ENCODE measurements at regions of chr11 and their contacts with region 1.

Region 1: DNA sequence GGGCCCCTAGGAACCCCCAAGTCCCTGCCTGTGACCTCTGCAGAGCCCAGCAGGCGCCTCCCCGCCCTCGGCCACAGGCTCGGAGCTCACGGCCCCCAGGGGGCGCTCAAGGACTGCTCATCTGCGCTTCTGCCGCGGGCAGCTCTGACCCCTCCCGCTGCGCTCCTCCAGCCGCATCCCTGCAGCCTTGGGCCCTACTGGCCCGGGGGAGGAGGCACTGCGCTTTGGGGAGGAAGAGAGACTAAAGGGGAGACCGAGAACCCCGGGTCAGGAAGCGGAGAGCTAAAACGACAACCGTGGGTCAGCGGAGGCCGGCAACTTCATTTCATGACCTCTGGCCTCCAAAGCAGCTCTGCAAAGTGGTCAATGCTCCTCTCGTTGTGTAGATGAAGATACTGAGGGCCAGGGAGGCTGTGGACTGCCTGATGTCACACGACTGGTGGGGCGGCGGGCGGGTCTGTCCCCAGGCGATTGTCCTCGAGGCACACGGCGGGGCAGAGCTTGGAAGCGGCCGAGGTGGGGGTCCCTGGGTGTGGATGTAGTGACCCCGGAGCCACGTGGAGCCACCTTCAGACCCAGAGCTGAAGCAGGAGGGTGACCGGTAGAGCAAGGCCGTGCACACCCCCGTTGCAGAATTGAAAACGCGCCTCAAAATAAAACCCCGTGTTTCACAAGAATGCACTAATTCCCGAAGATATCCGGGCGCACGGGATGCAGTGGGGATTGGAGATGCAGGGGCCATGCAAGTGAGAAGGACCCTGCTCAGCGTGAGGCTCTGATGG is 2.7 kb upstream of the KRTAP5-6 start:
- DNase-seq: peak; percentile 95
- H3K4me3 ChIP-seq: peak overlapping the region in 1 of 2 experiments; percentile 51; a peak in 1 of 4 replicates
- H3K27ac ChIP-seq: peak overlapping the region in 1 of 2 experiments; percentile 73; a peak in 1 of 4 replicates
- H3K4me1 ChIP-seq: peaks cover 6 to 13% of the 10 kb centered on the region in 2 experiments; a peak in 2 of 4 replicates
- H3K27me3 ChIP-seq: no peaks in the 10 kb centered on the region
- CTCF ChIP-seq: peak; percentile 85
- EP300 ChIP-seq: no peak
- RAD21 ChIP-seq: peak; percentile 91

Region 2: DNA sequence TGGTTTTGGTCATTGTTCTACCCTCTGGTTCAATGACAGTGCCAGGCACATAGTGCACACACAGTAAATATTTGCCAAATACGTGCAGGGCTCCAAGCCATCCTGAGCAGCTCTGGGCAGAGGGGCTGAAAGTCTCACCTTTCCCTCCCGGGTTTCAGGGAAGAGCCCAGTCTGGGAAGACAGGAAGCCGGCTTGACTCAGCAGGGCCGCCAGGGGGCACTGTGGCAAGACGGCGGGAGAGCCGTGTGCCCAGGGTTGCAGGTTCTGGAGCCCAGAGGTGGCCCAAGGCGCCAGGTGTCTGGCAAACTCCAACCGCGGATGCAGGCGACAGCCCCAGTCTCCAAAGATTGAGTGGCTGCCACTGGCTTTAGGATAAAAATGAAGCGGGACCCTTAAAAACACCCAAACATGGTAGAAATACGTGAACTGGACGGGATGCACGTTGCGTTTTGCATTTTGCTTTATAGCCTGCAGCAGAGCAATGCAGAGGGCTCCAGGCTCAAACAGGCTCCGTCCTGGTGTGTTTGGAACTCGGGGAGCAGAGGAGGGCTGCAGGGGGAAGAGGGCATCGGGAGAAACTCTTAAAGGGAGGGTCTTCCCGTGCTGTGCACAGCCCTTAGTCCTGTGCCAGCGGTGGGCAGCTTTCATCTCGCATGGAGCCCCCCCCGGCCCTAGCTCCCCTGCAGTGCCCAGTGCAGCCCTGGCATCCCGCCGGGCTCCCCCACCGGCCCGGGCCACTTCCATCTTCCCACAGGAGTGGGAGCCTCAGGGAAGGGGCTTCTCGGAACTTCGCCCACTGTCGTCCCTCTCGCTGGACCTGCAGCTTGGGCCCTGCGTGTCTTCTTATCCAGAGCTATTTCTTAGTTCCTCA is 53.9 kb before region 1 on chr11:
- CTCF ChIA-PET with region 1: interaction called, 28 read pairs
- POLR2A ChIA-PET with region 1: no interaction called
- DNase-seq: peak; percentile 86
- H3K4me3 ChIP-seq: no peak overlapping the region; a peak in 1 of 4 replicates
- H3K27ac ChIP-seq: no peak overlapping the region; a peak in 1 of 4 replicates
- H3K4me1 ChIP-seq: peaks cover 0 to 25% of the 10 kb centered on the region in 2 experiments; a peak in 1 of 4 replicates
- H3K27me3 ChIP-seq: no peaks in the 10 kb centered on the region
- CTCF ChIP-seq: peak; percentile 82
- EP300 ChIP-seq: no peak
- RAD21 ChIP-seq: peak; percentile 14; the same call in 1 of the 2 replicates

Region 3: DNA sequence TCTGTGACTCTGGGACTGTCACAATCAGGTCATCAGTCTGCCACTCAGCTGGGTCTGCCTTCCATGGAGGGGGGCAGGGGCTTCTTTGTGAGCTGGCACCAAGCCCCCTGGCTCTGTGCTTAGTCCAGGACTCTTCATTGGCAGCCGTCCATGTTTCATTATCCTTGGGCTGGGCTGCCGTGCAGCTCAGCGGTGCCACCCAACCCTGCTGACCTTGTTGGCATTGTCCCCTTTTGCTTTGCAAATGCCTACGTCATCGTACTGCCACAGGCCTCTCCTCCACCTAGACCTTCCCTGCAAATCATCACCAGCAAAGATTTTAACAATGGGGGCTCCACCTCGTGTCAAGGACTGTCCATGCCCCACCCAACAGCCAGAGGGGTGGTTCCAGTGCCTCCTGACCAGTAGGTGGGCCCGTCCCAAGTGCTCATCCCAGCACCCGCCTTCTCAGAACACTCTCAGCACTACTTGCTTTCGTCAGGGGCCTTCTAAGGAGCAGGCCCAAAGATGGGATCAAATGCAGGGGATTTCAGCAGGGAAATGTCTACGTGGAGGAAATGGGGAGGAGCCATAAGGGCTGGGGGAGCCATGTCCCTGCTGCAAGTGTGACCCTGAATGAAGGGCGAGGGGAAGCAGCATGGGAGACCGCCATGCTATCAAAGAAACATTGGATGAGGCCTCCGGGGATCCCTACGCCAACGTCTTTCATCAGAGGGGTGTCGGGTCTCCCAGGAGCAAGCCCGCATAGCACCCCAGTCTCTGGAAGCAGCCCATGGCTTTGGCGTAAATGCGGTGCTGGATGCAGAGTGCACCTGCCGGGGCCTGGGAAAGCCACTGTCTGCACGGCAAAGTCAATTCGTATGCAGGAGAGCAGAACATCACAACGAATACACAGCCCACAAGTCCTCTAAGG is 21.0 kb after region 1 on chr11:
- CTCF ChIA-PET with region 1: interaction called, 20 read pairs
- POLR2A ChIA-PET with region 1: no interaction called
- DNase-seq: no peak
- H3K4me3 ChIP-seq: no peak overlapping the region
- H3K27ac ChIP-seq: no peak overlapping the region
- H3K4me1 ChIP-seq: peaks cover 0 to 8% of the 10 kb centered on the region in 2 experiments; a peak in 1 of 4 replicates
- H3K27me3 ChIP-seq: no peaks in the 10 kb centered on the region; the same call in 1 of the 2 replicates
- CTCF ChIP-seq: no peak
- EP300 ChIP-seq: no peak
- RAD21 ChIP-seq: no peak

Region 4: DNA sequence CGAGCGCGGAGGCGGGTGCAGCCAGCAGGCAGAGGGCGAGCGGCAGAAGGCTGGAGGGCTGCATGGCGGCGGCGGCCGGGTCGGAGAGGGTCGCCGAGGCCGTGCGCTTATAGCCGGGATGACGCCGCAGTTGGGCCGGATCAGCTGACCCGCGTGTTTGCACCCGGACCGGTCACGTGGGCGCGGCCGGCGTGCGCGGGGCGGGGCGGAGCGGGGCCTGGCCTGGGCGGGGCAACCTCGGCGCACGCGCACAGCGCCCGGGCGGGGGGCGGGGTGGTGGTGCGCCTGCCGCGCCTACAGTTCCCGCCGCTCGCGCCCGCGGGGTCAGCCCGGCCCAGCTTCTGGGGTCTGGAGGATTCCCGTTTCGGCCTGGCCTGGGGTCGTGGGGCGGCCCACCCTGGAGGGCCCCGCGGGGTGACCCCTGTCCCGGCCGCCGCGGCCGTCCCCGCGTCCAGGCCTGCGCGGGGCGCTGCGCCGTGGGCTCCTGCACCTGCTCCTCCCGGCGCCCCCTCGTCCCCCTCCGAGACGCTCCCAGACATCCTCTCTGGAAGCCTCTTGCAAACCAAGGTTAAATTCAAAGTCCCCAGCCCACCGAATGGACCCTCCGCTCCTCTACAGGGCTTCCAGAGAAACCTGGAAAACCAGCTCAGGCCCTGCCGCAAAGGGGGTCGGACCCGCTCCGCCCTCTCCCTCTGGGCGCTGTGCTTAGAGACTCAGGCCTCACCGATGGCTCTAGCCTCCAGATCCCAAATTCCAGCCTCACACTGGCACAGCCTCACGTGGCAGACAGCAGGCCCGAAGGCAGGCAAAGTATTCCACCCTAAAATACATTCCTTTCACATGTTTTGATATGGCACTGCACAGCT is 69.8 kb after region 1 on chr11 and contains the start of gene CTSD:
- CTCF ChIA-PET with region 1: interaction called, 18 read pairs
- POLR2A ChIA-PET with region 1: interaction called, 3 read pairs
- DNase-seq: peak; percentile 100
- H3K4me3 ChIP-seq: peak within 1 kb of the TSS; percentile 92 to 94
- H3K27ac ChIP-seq: peak within 1 kb of the TSS in 1 of 2 experiments; percentile 81; a peak in 2 of 4 replicates
- H3K4me1 ChIP-seq: peaks cover 4 to 19% of the 10 kb centered on the region in 2 experiments; a peak in 3 of 4 replicates
- H3K27me3 ChIP-seq: no peaks in the 10 kb centered on the region
- CTCF ChIP-seq: peak; percentile 31
- EP300 ChIP-seq: no peak
- RAD21 ChIP-seq: no peak
- polyA plus RNA-seq, gene CTSD: 93.0 and 187 TPM in 2 replicates

Region 5: DNA sequence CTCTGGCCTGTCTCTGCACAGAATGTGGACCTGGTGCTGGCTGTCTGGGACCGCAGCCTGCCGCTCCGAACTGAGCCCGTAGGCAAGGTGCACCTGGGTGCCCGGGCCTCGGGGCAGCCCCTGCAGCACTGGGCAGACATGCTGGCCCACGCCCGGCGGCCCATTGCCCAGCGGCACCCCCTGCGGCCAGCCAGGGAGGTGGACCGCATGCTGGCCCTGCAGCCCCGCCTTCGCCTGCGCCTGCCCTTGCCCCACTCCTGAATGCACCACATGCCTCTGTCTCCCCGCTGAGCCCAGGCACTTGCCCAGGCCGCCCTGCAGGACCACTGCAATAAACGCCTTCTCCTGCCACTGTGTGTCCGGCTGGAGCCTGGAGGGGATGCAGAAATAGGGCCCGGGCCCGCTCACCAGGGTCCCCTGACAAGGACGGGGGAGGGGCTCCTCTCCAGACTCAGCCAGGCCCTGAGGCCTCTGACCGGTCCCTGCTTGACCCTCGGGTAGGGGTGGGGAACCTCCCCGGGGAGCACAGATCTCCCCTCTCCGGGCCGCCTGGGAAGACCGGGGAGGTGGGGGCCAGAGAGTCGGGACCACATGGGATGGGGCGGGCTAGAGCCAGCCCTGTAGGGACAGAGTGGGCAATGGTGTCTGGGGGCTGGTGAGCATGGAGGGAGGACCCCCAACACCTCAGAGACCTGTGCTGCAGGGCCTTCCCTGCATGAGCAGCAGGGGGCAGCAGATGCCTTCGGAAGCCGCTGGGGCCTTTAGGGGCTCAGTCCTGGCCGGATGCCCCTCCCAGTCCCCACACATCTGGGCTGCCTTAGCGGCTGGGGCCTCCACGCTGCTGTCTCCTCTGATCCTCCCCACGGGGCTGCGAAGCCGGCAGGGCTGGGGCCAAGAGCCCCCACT is 143.2 kb after region 1 on chr11:
- CTCF ChIA-PET with region 1: interaction called, 585 read pairs
- POLR2A ChIA-PET with region 1: interaction called, 11 read pairs
- DNase-seq: peak; percentile 97
- H3K4me3 ChIP-seq: no peak overlapping the region
- H3K27ac ChIP-seq: peak overlapping the region in 1 of 2 experiments; percentile 60; a peak in 1 of 4 replicates
- H3K4me1 ChIP-seq: peaks cover 0 to 39% of the 10 kb centered on the region in 2 experiments; a peak in 1 of 4 replicates
- H3K27me3 ChIP-seq: no peaks in the 10 kb centered on the region
- CTCF ChIP-seq: peak; percentile 80
- EP300 ChIP-seq: no peak
- RAD21 ChIP-seq: peak; percentile 93

Region 6: DNA sequence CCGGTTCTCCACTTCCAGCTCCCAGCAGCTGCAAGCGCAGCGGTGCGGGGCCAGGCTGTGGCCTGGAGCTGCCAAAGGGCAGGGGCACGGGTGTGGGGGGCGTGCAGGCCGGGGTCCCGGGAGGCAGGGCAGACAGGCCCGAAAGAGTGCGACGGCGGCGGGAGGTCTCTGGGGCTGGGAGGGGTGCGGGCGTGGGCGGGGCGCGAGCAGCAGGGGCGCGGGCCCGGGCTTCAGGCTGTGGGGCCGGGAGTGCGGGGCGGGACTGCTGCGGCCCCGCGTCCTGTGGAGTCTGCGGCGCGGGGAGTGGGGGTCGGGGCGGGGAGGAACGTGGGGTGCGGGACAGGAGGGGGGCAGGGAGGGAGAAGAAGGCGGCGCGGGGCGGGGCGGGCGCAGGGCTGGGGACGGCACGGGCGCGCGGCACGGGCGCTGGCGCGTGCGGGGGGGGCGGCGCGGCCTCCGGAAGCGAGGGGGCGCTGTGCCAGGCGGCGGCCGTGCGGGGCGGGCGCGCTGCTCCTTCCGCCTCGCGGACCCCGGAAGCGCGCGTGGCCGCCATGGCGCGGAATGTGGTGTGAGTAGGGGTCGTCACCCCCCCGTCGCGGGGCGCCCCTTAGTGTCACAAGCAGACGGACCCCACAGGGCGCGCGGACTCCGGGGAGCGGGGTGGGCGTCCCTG is 252.7 kb after region 1 on chr11 and contains the start of gene MRPL23:
- CTCF ChIA-PET with region 1: interaction called, 17 read pairs
- POLR2A ChIA-PET with region 1: interaction called, 3 read pairs
- DNase-seq: no peak
- H3K4me3 ChIP-seq: no peak within 1 kb of the TSS
- H3K27ac ChIP-seq: no peak within 1 kb of the TSS
- H3K4me1 ChIP-seq: peaks cover 0 to 15% of the 10 kb centered on the region in 2 experiments; a peak in 1 of 4 replicates
- H3K27me3 ChIP-seq: no peaks in the 10 kb centered on the region
- CTCF ChIP-seq: no peak
- EP300 ChIP-seq: no peak
- RAD21 ChIP-seq: no peak
- polyA plus RNA-seq, gene MRPL23: 226 and 264 TPM in 2 replicates

Region 7: GRCh38 chr11:2036863-2037486 is 342.7 kb after region 1 on chr11:
- CTCF ChIA-PET with region 1: interaction called, 25 read pairs
- POLR2A ChIA-PET with region 1: no interaction called
- DNase-seq: no peak
- H3K4me3 ChIP-seq: no peak overlapping the region
- H3K27ac ChIP-seq: no peak overlapping the region
- H3K4me1 ChIP-seq: no peaks in the 10 kb centered on the region
- H3K27me3 ChIP-seq: no peaks in the 10 kb centered on the region
- CTCF ChIP-seq: no peak
- EP300 ChIP-seq: no peak
- RAD21 ChIP-seq: no peak

Region 8: DNA sequence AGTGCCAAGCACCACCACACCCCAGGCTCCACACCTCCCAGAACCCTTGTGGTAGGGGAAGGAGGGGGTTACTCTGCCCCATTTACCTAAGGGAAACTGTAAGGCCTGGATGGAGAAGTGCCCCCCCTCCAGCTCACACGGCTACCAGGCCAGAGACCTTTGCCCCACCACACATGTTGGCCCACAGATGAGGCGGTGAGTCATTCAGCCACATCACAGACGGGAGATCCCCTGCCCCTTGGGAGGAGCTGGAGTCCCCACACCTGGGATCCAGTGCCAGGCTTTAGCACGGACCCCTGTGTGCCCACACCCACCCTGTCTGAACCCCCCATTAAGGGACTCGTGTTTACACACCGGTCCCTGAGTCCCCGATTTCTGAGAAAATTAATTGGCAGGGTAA is 1166.4 kb after region 1 on chr11:
- CTCF ChIA-PET with region 1: no interaction called
- POLR2A ChIA-PET with region 1: no interaction called
- DNase-seq: no peak
- H3K4me3 ChIP-seq: no peak overlapping the region
- H3K27ac ChIP-seq: no peak overlapping the region
- H3K4me1 ChIP-seq: peaks cover 0 to 4% of the 10 kb centered on the region in 2 experiments; a peak in 1 of 4 replicates
- H3K27me3 ChIP-seq: 0 out of 2 replicates have a peak, but pooled peaks cover 4% of the 10 kb centered on the region
- CTCF ChIP-seq: no peak
- EP300 ChIP-seq: no peak
- RAD21 ChIP-seq: no peak